ENCODE measurements at regions of chr17 and their contacts with region 1.

Region 1: DNA sequence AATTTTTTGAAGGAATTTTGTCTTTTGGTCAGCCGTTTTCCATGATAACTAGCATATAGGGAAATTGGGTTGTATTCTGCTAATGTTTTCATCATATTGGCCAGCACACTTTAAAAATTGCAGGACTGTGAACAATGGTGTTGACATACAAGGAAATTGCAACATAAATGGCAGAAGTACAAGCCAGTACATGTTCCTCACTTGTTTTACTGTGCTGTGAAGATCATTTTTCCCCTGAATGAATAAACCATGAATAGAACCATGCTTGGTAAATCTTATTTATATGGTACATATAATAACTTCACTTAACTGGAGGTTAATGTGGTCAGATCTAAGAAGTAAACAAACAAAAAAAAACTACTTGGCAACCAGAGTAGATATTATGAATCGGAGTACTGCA is 22.8 kb downstream of the OMG start:
- DNase-seq: no peak

Region 2: DNA sequence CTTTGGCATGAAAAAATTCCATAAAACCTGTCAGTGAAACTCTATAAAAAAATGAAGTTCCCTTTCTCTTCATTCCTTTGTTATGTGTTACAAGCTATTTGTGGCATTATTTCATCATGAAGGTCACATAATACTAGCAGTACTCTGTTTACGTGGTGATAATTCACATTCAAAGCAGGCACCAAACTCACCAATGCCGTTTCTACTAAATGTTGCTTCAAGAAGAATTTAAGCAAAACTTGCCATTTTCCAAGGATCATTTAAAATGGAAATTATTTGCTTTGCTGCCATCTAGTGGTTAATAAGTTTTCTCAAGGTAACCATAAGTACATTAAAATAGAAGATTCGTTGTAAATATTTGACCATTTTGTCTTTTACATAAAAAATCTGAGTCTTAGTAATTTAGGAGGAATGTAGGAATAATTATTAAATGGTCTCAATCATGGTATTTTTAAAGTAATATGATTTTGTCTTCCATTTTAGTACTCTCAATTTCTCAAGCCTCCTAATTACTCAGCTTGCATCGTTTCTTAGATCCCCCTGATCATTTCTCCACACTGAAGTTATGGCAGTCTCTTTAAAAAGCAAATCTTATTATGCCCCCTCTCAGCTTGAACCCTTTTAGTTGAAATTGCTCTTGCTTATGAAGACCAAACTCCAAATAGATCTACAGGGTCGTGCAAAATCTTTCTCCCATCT is 58.0 kb before region 1 on chr17:
- intact Hi-C with region 1: no loop called
- DNase-seq: no peak

Region 3: DNA sequence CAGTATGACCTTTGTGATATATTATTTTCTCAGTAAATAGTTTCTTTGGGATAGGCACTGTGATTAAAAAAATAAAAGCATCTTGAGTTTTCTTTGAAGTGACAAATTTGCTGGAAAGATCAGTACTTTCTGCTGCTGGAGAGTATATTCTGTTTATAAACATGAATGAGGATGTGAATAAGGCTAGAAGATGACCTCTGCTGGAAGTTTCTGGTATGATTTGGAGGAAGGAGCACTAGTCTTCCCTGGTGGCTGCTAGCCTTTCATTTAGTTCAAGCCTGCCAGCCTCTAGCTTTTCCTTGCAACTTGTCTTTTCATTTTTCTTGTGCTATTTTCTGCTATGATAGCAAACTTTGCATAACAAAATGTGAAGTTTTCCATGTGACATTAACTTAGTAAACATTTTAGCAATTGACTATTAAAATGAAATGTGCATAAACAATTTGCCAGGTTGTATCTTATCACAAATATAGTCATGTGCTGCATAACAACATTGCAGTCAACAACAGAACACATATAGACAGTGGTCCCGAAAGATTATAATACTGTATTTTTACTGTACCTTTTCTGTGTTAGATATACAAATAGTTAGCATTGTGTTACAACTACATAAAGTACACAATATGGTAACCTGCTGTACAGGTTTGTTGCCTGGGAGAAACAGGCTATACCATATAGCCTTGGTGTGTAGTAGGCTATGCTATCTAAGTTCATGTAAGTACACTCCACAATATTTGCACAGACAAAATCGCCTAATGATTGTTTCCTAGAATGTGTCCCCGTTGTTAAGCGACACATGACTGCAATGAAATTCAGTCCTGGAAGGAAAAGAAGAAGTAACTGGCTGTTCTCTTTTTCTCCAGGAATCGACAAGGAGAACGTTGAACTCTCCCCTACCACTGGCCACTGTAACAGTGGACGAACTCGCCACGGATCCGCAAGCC is 99.2 kb after region 1 on chr17:
- intact Hi-C with region 1: loop called (anchors 10 kb)
- DNase-seq: no peak